Heart left ventricle (tissue), 16 donors: ENCODE measurements at regions of chr17 and their contacts with region 1.

Region 1: GRCh38 chr17:39450847-39451581 is at the start of gene MED1:
- DNase-seq: peak; percentile 94 to 96 (median 95)
- ATAC-seq: peak; percentile 98 to 99 (median 99)
- H3K4me3 ChIP-seq: peak within 1 kb of the TSS; percentile 64 to 94 (median 83)
- H3K27ac ChIP-seq: peak within 1 kb of the TSS; percentile 66 to 91 (median 83)
- H3K4me1 ChIP-seq: peaks cover 0 to 29% (median 12%) of the 10 kb centered on the region in 12 donors
- H3K27me3 ChIP-seq: no peaks in the 10 kb centered on the region
- CTCF ChIP-seq: no peak
- POLR2A ChIP-seq: peak in 1 of 2 donors; percentile 61
- total RNA-seq, gene MED1: 18.0 to 29.4 (median 20.8) TPM

Region 2: GRCh38 chr17:39385040-39385439 is 66.0 kb before region 1 on chr17:
- intact Hi-C with region 1: no loop called
- DNase-seq: no peak
- ATAC-seq: no peak
- H3K4me3 ChIP-seq: no peak overlapping the region
- H3K27ac ChIP-seq: no peak overlapping the region
- H3K4me1 ChIP-seq: peaks cover 0 to 6% (median 0%) of the 10 kb centered on the region in 12 donors
- H3K27me3 ChIP-seq: no peaks in the 10 kb centered on the region
- CTCF ChIP-seq: no peak
- POLR2A ChIP-seq: no peak

Region 3: GRCh38 chr17:39461113-39461925 is 10.3 kb after region 1 on chr17 and contains the start of gene CDK12:
- intact Hi-C with region 1: loop called in 2 of 10 experiments (anchors 1 kb)
- DNase-seq: peak; percentile 93 to 97 (median 97)
- ATAC-seq: peak; percentile 90 to 94 (median 90)
- H3K4me3 ChIP-seq: peak within 1 kb of the TSS; percentile 76 to 98 (median 89)
- H3K27ac ChIP-seq: peak within 1 kb of the TSS; percentile 88 to 99 (median 97)
- H3K4me1 ChIP-seq: peaks cover 4 to 35% (median 27%) of the 10 kb centered on the region in 12 donors
- H3K27me3 ChIP-seq: no peaks in the 10 kb centered on the region
- CTCF ChIP-seq: no peak
- POLR2A ChIP-seq: peak in 1 of 2 donors; percentile 78
- total RNA-seq, gene CDK12: 15.8 to 34.3 (median 23.1) TPM

Region 4: GRCh38 chr17:39485555-39485954 is 34.5 kb after region 1 on chr17:
- intact Hi-C with region 1: no loop called
- DNase-seq: no peak
- ATAC-seq: no peak
- H3K4me3 ChIP-seq: no peak overlapping the region
- H3K27ac ChIP-seq: no peak overlapping the region
- H3K4me1 ChIP-seq: no peaks in the 10 kb centered on the region
- H3K27me3 ChIP-seq: no peaks in the 10 kb centered on the region
- CTCF ChIP-seq: no peak
- POLR2A ChIP-seq: no peak